ENCODE measurements at regions of chr1 and their contacts with region 1.

Region 1: GRCh38 chr1:207004981-207005830 is 27.4 kb downstream of the C1orf116 start:
- DNase-seq: peak; percentile 74
- ATAC-seq: peak; percentile 79
- H3K4me3 ChIP-seq: no peak overlapping the region
- H3K27ac ChIP-seq: no peak overlapping the region
- H3K4me1 ChIP-seq: peaks cover 27 to 63% of the 10 kb centered on the region in 2 experiments
- H3K27me3 ChIP-seq: no peaks in the 10 kb centered on the region
- CTCF ChIP-seq: peak; percentile 63 to 90 (median 87); a peak in 5 of 6 replicates
- POLR2A ChIP-seq: no peak
- RAD21 ChIP-seq: peak; percentile 52

Region 2: GRCh38 chr1:206925106-206925736 is 80.0 kb before region 1 on chr1:
- CTCF ChIA-PET with region 1: no interaction called
- POLR2A ChIA-PET with region 1: no interaction called
- RAD21 ChIA-PET with region 1: no interaction called
- intact Hi-C with region 1: no loop called
- DNase-seq: no peak
- ATAC-seq: peak; percentile 52; the same call in 1 of the 2 replicates
- H3K4me3 ChIP-seq: no peak overlapping the region
- H3K27ac ChIP-seq: no peak overlapping the region
- H3K4me1 ChIP-seq: peaks cover 0 to 9% of the 10 kb centered on the region in 2 experiments; a peak in 2 of 4 replicates
- H3K27me3 ChIP-seq: no peaks in the 10 kb centered on the region
- CTCF ChIP-seq: no peak
- POLR2A ChIP-seq: no peak
- RAD21 ChIP-seq: no peak

Region 3: GRCh38 chr1:207052911-207053769 is 47.9 kb after region 1 on chr1 and contains the start of gene PFKFB2:
- CTCF ChIA-PET with region 1: interaction called, 3 read pairs
- POLR2A ChIA-PET with region 1: interaction called, 3 read pairs
- RAD21 ChIA-PET with region 1: no interaction called
- intact Hi-C with region 1: loop called (anchors 2 kb)
- DNase-seq: peak; percentile 99
- ATAC-seq: peak; percentile 89
- H3K4me3 ChIP-seq: peak within 1 kb of the TSS; percentile 88 to 90
- H3K27ac ChIP-seq: peak within 1 kb of the TSS; percentile 85
- H3K4me1 ChIP-seq: peaks cover 11 to 29% of the 10 kb centered on the region in 2 experiments
- H3K27me3 ChIP-seq: no peaks in the 10 kb centered on the region
- CTCF ChIP-seq: 0 out of 6 replicates have a peak, but pooled peaks of 1 of the 3 experiments have one; percentile 19
- POLR2A ChIP-seq: peak; percentile 72
- RAD21 ChIP-seq: no peak
- total RNA-seq, gene PFKFB2: 13.9 TPM

Measured in HCT116 (cell line).